ENCODE measurements at regions of chr1 and their contacts with region 1.

Region 1: DNA sequence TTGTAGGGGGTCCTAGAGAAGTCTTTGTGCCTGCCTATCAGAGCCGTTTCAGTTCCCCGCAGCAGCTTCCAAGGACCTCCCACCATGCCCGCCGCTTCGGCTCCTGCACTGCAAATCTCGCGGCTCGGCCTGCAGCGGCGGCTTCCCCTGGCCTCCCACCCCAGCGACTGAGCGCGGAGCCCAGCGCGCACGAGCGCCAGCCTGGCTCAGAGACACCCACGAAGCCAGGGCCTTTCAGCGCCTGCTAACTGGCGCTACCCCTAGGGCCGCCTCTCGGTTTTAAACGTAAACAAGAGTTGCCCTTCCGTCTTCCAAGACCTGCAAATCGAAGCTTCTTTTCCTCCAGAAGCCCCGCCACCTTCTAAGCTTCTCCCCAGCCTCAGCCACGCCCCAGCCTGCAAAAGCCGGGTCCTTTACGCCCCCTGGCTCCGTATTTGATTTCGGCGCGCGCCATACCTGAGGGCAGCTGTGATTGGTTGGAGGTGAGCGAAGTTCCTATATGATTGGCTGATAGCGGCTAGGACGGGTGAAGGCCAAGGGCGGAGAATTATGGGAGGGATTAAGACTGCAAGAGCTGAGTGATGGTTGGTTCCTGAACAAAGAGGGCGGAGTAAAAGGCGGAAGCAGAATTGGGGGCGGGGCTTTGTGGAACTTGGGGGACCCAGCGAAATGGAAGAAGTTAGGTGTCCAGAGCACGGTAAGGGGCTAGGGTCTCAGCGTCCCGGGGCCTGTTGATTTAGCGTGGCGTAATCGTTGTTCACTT is at the start of gene TTF2:
- DNase-seq: peak; percentile 89
- ATAC-seq: peak; percentile 98
- H3K4me3 ChIP-seq: peak within 1 kb of the TSS; percentile 73 to 85
- H3K27ac ChIP-seq: peak within 1 kb of the TSS; percentile 76
- H3K4me1 ChIP-seq: peaks cover 9% of the 10 kb centered on the region; the same call in 1 of the 2 replicates
- H3K27me3 ChIP-seq: no peaks in the 10 kb centered on the region
- CTCF ChIP-seq: no peak
- total RNA-seq, gene TTF2: 32.7 TPM

Region 2: GRCh38 chr1:116574581-116575291 is 485.1 kb before region 1 on chr1:
- CTCF ChIA-PET with region 1: interaction called, 3 read pairs
- POLR2A ChIA-PET with region 1: no interaction called
- in situ Hi-C with region 1: no loop called
- intact Hi-C with region 1: loop called (anchors 2 kb)
- DNase-seq: no peak
- ATAC-seq: no peak
- H3K4me3 ChIP-seq: no peak overlapping the region
- H3K27ac ChIP-seq: no peak overlapping the region
- H3K4me1 ChIP-seq: no peaks in the 10 kb centered on the region
- H3K27me3 ChIP-seq: no peaks in the 10 kb centered on the region
- CTCF ChIP-seq: peak; percentile 81

Region 3: GRCh38 chr1:116733476-116734365 is 326.1 kb before region 1 on chr1:
- CTCF ChIA-PET with region 1: no interaction called
- POLR2A ChIA-PET with region 1: no interaction called
- in situ Hi-C with region 1: no loop called
- intact Hi-C with region 1: loop called (anchors 5 kb)
- DNase-seq: no peak
- ATAC-seq: no peak
- H3K4me3 ChIP-seq: no peak overlapping the region
- H3K27ac ChIP-seq: no peak overlapping the region
- H3K4me1 ChIP-seq: no peaks in the 10 kb centered on the region
- H3K27me3 ChIP-seq: no peaks in the 10 kb centered on the region; the same call in 1 of the 2 replicates
- CTCF ChIP-seq: no peak

Region 4: GRCh38 chr1:116943438-116943837 is 116.4 kb before region 1 on chr1:
- CTCF ChIA-PET with region 1: no interaction called
- POLR2A ChIA-PET with region 1: no interaction called
- in situ Hi-C with region 1: no loop called
- intact Hi-C with region 1: no loop called
- DNase-seq: no peak
- ATAC-seq: no peak
- H3K4me3 ChIP-seq: no peak overlapping the region
- H3K27ac ChIP-seq: no peak overlapping the region
- H3K4me1 ChIP-seq: no peaks in the 10 kb centered on the region
- H3K27me3 ChIP-seq: no peaks in the 10 kb centered on the region
- CTCF ChIP-seq: no peak